Colonic mucosa (tissue), 4 donors: ENCODE measurements at regions of chr4 and their contacts with region 1.

Region 1: GRCh38 chr4:16196478-16197393 is 29.5 kb downstream of the TAPT1 start:
- DNase-seq: peak; percentile 54
- H3K4me3 ChIP-seq: no peak overlapping the region
- H3K27ac ChIP-seq: peak overlapping the region; percentile 18
- H3K4me1 ChIP-seq: no peaks in the 10 kb centered on the region
- H3K27me3 ChIP-seq: no peaks in the 10 kb centered on the region
- CTCF ChIP-seq: peak; percentile 41

Region 2: GRCh38 chr4:16026160-16026761 is 170.5 kb before region 1 on chr4:
- intact Hi-C with region 1: loop called (anchors 5 kb)
- DNase-seq: peak; percentile 50
- H3K4me3 ChIP-seq: no peak overlapping the region
- H3K27ac ChIP-seq: no peak overlapping the region
- H3K4me1 ChIP-seq: no peaks in the 10 kb centered on the region
- H3K27me3 ChIP-seq: no peaks in the 10 kb centered on the region
- CTCF ChIP-seq: peak; percentile 88

Region 3: DNA sequence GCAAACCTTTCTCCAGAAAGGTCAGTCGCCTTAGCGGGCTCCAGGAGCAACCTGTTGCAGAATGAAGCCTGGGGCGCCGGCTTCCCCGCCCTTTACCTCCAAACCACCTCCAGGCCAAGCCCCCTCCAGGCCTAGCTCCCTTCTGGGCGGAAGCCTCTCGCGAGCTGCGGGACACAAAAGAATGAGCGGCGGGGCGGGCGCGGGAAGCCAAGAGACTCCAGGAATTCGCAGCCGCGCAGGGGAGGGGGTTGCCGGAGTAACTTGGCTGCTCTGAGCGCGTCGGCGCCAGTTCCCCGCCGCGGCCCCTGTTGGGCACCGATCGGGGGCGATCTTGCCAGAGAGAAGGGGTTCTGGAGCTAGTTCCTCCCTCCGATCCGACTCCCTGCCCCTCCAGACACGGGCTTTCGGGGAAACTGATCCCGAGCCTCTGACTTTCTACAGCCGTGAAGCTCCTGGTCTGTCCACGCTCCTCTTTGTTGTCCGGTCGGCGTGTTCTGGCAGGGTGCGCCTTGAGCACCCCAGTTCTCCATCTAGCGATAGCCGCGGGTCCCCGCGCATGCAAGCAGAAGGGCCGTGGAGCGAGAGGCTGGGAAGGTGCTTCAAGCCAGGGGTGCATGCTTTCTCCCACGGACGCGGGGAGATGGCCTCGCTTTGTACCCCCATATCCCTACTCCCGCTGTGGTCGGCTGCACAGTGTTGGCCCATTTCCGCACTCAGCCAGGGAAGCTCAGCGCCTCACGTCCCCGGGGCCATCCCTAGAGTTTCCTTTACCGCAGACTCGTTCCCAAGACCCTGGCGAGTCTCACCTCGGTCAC is 114.1 kb before region 1 on chr4:
- intact Hi-C with region 1: loop called (anchors 10 kb)
- DNase-seq: peak; percentile 45
- H3K4me3 ChIP-seq: peak overlapping the region; percentile 57
- H3K27ac ChIP-seq: no peak overlapping the region
- H3K4me1 ChIP-seq: no peaks in the 10 kb centered on the region
- H3K27me3 ChIP-seq: peaks cover 11% of the 10 kb centered on the region
- CTCF ChIP-seq: no peak